ENCODE measurements at regions of chr18 and their contacts with region 1.

Region 1: DNA sequence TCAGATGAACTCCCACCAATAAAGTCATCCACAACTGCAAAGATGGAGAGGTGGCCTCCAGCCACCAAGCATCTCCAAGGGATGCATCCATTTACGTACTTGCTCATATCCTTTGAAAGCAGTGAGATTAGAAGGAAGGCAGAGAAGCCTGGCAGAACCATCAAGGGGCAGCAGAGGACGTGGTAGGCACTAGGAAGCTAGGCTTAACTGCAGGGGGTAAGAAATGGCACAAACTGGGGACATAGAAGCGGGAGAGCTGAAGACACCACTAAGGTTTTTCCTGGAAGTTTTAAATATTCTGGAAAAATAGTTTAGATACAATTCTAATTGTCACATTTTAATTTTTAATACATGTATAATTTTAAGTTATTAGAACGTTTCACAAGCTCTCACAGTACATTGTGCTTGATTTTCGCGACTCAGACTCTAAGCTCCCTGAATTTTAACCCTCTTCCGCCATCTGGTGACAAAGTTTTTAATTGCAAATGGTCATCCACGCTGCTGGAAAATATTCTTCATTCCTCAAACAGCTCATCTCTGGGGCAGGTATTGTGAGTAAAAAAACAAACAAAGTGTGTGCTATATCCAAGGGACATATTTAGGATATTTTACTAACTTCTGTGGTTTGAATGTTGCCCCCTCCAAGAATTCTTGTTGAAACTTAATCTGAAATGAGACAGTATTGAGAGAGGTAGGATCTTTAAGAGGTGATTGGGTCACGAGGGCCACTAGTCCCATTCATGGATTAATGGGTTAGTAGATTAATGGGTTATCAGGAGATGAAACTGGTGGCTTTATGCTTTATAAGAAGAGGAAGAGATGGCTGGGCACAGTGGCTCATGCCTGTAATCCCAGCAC is 1.6 kb upstream of the PSTPIP2 start:
- DNase-seq: peak in 10 of 14 experiments; percentile 32 to 82 (median 47)
- ATAC-seq: peak; percentile 67
- H3K4me3 ChIP-seq: no peak overlapping the region
- H3K4me3 Mint-ChIP-seq: peak overlapping the region; percentile 81
- H3K27ac ChIP-seq: no peak overlapping the region
- H3K27ac Mint-ChIP-seq: no peak overlapping the region
- H3K4me1 ChIP-seq: peaks cover 41% of the 10 kb centered on the region
- H3K4me1 Mint-ChIP-seq: peaks cover 43% of the 10 kb centered on the region
- H3K27me3 ChIP-seq: no peaks in the 10 kb centered on the region
- H3K27me3 Mint-ChIP-seq: no peaks in the 10 kb centered on the region
- CTCF ChIP-seq: peak; percentile 78

Region 2: GRCh38 chr18:45664824-45665763 is 408.6 kb before region 1 on chr18:
- CTCF ChIA-PET with region 1: interaction called, 3 read pairs
- POLR2A ChIA-PET with region 1: interaction called, 4 read pairs
- intact Hi-C with region 1: loop called (anchors 1 to 2 kb)
- DNase-seq: peak; percentile 47 to 85 (median 59)
- ATAC-seq: peak; percentile 75
- H3K4me3 ChIP-seq: no peak overlapping the region
- H3K4me3 Mint-ChIP-seq: peak overlapping the region; percentile 59
- H3K27ac ChIP-seq: no peak overlapping the region
- H3K27ac Mint-ChIP-seq: peak overlapping the region; percentile 69
- H3K4me1 ChIP-seq: peaks cover 53% of the 10 kb centered on the region
- H3K4me1 Mint-ChIP-seq: peaks cover 61% of the 10 kb centered on the region
- H3K27me3 ChIP-seq: no peaks in the 10 kb centered on the region
- H3K27me3 Mint-ChIP-seq: no peaks in the 10 kb centered on the region
- CTCF ChIP-seq: peak; percentile 93

Region 3: GRCh38 chr18:45910405-45911023 is 163.2 kb before region 1 on chr18:
- CTCF ChIA-PET with region 1: interaction called, 3 read pairs
- POLR2A ChIA-PET with region 1: no interaction called
- intact Hi-C with region 1: loop called in 1 of 2 experiments (anchors 1 kb)
- DNase-seq: peak; percentile 39 to 78 (median 56)
- ATAC-seq: peak; percentile 81
- H3K4me3 ChIP-seq: no peak overlapping the region
- H3K4me3 Mint-ChIP-seq: no peak overlapping the region
- H3K27ac ChIP-seq: no peak overlapping the region
- H3K27ac Mint-ChIP-seq: no peak overlapping the region
- H3K4me1 ChIP-seq: no peaks in the 10 kb centered on the region
- H3K4me1 Mint-ChIP-seq: no peaks in the 10 kb centered on the region
- H3K27me3 ChIP-seq: no peaks in the 10 kb centered on the region
- H3K27me3 Mint-ChIP-seq: no peaks in the 10 kb centered on the region
- CTCF ChIP-seq: peak; percentile 69

Region 4: GRCh38 chr18:45967007-45967706 is 106.5 kb before region 1 on chr18 and contains the start of gene EPG5:
- CTCF ChIA-PET with region 1: interaction called, 5 read pairs
- POLR2A ChIA-PET with region 1: interaction called, 10 read pairs
- intact Hi-C with region 1: loop called in 1 of 2 experiments (anchors 2 kb)
- DNase-seq: peak; percentile 80 to 96 (median 87)
- ATAC-seq: peak; percentile 92
- H3K4me3 ChIP-seq: peak within 1 kb of the TSS; percentile 70
- H3K4me3 Mint-ChIP-seq: peak within 1 kb of the TSS; percentile 99
- H3K27ac ChIP-seq: peak within 1 kb of the TSS; percentile 65 to 68
- H3K27ac Mint-ChIP-seq: peak within 1 kb of the TSS; percentile 86
- H3K4me1 ChIP-seq: peaks cover 30% of the 10 kb centered on the region
- H3K4me1 Mint-ChIP-seq: peaks cover 50% of the 10 kb centered on the region
- H3K27me3 ChIP-seq: no peaks in the 10 kb centered on the region
- H3K27me3 Mint-ChIP-seq: no peaks in the 10 kb centered on the region
- CTCF ChIP-seq: no peak
- total RNA-seq, gene EPG5: 25.3 to 26.9 TPM

Region 5: GRCh38 chr18:45997700-45998151 is 76.0 kb before region 1 on chr18:
- CTCF ChIA-PET with region 1: interaction called, 5 read pairs
- POLR2A ChIA-PET with region 1: interaction called, 15 read pairs
- intact Hi-C with region 1: no loop called
- DNase-seq: peak in 11 of 14 experiments; percentile 4 to 46 (median 23)
- ATAC-seq: peak; percentile 56
- H3K4me3 ChIP-seq: peak overlapping the region; percentile 38
- H3K4me3 Mint-ChIP-seq: peak overlapping the region; percentile 77
- H3K27ac ChIP-seq: peak overlapping the region; percentile 63 to 79
- H3K27ac Mint-ChIP-seq: peak overlapping the region; percentile 93
- H3K4me1 ChIP-seq: peaks cover 42% of the 10 kb centered on the region
- H3K4me1 Mint-ChIP-seq: peaks cover 47% of the 10 kb centered on the region
- H3K27me3 ChIP-seq: no peaks in the 10 kb centered on the region
- H3K27me3 Mint-ChIP-seq: no peaks in the 10 kb centered on the region
- CTCF ChIP-seq: no peak

Region 6: DNA sequence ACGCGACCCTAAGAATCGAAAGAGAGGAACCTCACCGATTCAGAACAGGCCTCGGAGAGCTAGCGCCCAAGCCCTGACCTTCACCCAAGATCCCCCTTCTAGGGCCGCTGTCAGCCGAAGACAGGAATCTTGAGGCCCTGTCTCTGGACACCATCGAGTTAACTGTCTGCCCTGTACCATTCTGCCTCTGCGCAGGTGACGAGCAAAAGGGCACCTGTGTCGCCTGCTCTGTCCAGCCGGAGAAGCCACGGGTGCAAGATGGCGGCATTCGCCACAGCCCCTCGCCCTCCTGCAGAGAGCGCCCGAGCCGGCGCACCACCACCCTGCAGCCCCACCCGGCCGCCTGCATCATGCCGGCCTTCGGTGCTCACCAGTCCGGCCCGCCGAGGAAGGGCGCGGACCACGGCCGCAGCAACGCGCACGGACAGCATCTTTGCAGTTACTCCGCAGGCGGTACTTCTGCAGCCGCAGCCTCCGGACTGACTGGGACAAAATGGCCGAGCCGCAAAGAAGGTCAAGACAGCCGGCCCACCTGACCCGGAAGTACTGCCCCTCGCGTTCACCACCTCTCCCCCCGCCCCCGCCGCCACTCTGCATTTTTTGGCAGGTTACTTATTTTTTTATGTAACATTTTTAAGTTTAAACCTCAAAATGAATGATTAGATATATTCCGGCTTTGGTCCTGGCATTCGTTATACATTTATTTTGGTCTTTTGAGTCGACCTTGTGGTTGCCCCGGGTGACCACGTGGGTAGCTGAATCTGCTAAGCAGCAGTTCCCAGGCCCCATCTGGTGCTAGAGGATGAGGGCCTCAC is 24.3 kb after region 1 on chr18 and contains the start of gene ATP5F1A:
- CTCF ChIA-PET with region 1: interaction called, 13 read pairs
- POLR2A ChIA-PET with region 1: interaction called, 5 read pairs
- intact Hi-C with region 1: no loop called
- DNase-seq: peak; percentile 76 to 93 (median 82)
- ATAC-seq: peak; percentile 84
- H3K4me3 ChIP-seq: peak within 1 kb of the TSS; percentile 82
- H3K4me3 Mint-ChIP-seq: peak within 1 kb of the TSS; percentile 100
- H3K27ac ChIP-seq: peak within 1 kb of the TSS; percentile 74 to 77
- H3K27ac Mint-ChIP-seq: peak within 1 kb of the TSS; percentile 99
- H3K4me1 ChIP-seq: peaks cover 41% of the 10 kb centered on the region
- H3K4me1 Mint-ChIP-seq: peaks cover 34% of the 10 kb centered on the region
- H3K27me3 ChIP-seq: no peaks in the 10 kb centered on the region
- H3K27me3 Mint-ChIP-seq: no peaks in the 10 kb centered on the region
- CTCF ChIP-seq: no peak
- total RNA-seq, gene ATP5F1A: 205 to 206 TPM

Measured in CD4-positive, alpha-beta T cell (primary cell).